ENCODE measurements at regions of chr4 and their contacts with region 1.

Region 1: DNA sequence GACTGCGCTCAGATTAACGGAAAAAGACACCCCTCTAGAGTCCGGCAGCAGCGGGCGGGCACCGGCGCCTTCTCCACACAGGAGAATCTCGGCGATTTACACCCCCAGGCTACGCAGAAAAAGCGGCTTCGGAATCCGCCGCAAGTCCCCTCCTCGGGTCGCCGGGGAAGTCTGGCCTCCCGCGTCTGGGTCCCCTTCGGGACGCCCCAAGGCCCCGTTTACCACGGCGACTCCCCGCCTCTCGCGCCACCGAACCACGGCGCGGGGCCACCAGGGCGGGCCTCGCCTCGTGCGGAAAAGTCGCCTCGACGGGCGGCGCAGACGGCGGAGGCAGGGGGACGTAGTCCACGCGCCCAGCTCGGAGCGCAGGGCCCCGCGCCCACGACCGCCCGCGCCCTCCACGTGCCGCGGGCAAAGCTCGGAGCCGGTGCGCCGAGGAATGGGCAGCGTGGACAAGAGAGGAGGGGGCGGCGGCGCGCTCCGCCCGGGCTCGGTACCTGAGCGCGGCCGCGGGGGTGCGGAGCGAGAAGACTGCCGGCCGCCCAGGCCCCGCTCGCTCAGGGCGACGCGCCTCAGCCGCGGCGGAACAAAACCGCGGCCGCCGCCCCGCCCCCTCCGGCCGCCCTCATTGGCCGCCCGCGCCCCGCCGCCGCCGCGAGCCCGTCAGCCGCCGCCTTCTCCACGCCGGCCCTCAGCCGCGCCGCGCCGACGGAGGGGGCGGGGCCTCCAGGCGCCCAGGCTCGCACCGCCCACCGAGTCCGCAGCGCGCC is at the start of gene FAM53A:
- DNase-seq: peak; percentile 94
- ATAC-seq: peak; percentile 94
- H3K4me3 ChIP-seq: peak within 1 kb of the TSS; percentile 45 to 78 (median 61)
- H3K4me3 Mint-ChIP-seq: peak within 1 kb of the TSS; percentile 94
- H3K27ac ChIP-seq: peak within 1 kb of the TSS in 1 of 2 donors; percentile 31
- H3K27ac Mint-ChIP-seq: peak within 1 kb of the TSS; percentile 86
- H3K4me1 ChIP-seq: peaks cover 10 to 16% of the 10 kb centered on the region in 2 donors
- H3K4me1 Mint-ChIP-seq: peaks cover 10% of the 10 kb centered on the region
- H3K27me3 ChIP-seq: no peaks in the 10 kb centered on the region
- H3K27me3 Mint-ChIP-seq: no peaks in the 10 kb centered on the region
- CTCF ChIP-seq: no peak
- total RNA-seq, gene FAM53A: 1.8 and 4.2 TPM in 2 replicates

Region 2: DNA sequence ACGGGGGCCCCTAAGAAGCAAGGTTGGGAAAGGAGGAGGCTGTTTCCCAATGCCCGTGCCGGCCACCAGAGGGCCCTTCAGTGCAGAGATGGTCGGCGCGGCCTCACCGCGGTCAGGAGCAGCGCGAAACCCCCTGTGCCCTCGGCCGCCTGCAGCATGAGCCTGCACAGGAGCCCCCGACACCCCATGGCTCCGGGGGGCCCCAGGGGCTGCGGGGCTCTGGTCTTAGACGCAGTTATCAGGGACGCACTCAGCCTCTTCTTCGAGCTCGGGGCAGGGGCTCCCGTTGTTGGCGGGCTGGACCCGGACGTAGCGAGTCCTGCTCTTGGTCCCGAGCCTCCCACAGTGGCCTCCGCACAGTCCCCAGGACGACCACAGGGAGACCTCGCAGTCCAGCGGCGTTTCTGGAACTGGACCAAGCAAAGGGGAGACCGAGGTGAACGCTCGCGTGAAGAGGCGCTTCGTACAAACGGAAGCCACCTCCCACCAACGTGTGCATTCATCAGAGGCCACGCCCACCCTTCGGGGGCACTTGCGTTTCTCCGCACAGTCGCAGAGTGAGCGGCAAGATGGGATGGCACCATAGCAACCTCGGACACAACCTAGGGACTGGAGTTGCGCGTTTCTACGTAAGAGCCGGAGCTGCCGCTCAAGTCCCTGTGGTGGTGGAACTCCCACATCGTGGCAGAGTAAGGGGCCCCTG is 516.5 kb before region 1 on chr4:
- CTCF ChIA-PET with region 1: no interaction called
- POLR2A ChIA-PET with region 1: no interaction called
- intact Hi-C with region 1: no loop called
- DNase-seq: peak; percentile 94
- ATAC-seq: peak; percentile 84
- H3K4me3 ChIP-seq: peak overlapping the region; percentile 67 to 97 (median 92)
- H3K4me3 Mint-ChIP-seq: peak overlapping the region; percentile 86
- H3K27ac ChIP-seq: peak overlapping the region; percentile 73 to 79
- H3K27ac Mint-ChIP-seq: peak overlapping the region; percentile 79
- H3K4me1 ChIP-seq: peaks cover 50 to 64% of the 10 kb centered on the region in 2 donors
- H3K4me1 Mint-ChIP-seq: peaks cover 54% of the 10 kb centered on the region
- H3K27me3 ChIP-seq: peaks cover 0 to 20% (median 9%) of the 10 kb centered on the region in 4 experiments
- H3K27me3 Mint-ChIP-seq: peaks cover 3% of the 10 kb centered on the region
- CTCF ChIP-seq: peak; percentile 96

Region 3: GRCh38 chr4:1317177-1318045 is 366.5 kb before region 1 on chr4:
- CTCF ChIA-PET with region 1: no interaction called
- POLR2A ChIA-PET with region 1: interaction called, 10 read pairs
- intact Hi-C with region 1: no loop called
- DNase-seq: no peak
- ATAC-seq: no peak
- H3K4me3 ChIP-seq: no peak overlapping the region
- H3K4me3 Mint-ChIP-seq: no peak overlapping the region
- H3K27ac ChIP-seq: no peak overlapping the region
- H3K27ac Mint-ChIP-seq: no peak overlapping the region
- H3K4me1 ChIP-seq: no peaks in the 10 kb centered on the region
- H3K4me1 Mint-ChIP-seq: no peaks in the 10 kb centered on the region
- H3K27me3 ChIP-seq: no peaks in the 10 kb centered on the region
- H3K27me3 Mint-ChIP-seq: no peaks in the 10 kb centered on the region
- CTCF ChIP-seq: no peak

Region 4: DNA sequence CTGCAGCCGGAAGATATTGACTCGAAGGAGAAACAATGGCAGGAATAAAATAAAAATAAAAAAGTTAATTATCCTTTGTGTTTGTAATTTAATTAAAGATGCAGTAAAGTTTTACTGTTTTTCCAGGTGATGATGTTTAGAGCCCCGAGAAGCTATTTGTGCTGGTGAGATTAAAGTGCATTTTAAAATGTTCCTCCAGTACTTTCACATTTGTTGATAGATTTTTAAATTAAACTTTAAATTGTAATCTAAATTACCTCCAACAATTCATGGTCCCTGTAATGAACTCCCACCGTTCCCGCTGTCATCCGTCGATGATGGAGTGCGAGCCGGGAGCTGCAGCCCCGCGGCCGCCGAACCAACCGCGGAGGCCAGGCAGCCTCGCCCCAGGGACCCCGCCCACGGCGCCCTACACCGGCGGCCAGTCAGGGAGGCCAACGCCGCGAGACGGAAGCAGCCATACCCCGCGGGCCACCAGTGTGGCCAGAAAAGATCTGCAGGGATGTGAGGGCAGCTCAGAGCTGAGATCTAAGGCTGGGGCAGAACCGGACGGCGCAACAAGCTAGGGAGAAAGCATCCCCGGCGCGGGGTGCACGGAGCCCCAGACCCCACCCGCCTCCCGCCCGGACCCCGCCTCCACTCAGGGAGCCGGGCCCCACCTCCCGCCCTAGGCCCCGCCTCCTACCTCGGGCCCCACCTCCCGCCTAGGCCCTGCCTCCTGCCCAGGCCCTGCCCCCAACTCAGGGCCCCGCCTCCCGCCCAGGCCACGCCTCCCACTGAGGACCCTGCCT is 103.8 kb before region 1 on chr4:
- CTCF ChIA-PET with region 1: no interaction called
- POLR2A ChIA-PET with region 1: no interaction called
- intact Hi-C with region 1: loop called (anchors 1 kb)
- DNase-seq: peak; percentile 95
- ATAC-seq: peak; percentile 79
- H3K4me3 ChIP-seq: peak overlapping the region; percentile 72 to 84 (median 76)
- H3K4me3 Mint-ChIP-seq: peak overlapping the region; percentile 85
- H3K27ac ChIP-seq: peak overlapping the region; percentile 46 to 71
- H3K27ac Mint-ChIP-seq: peak overlapping the region; percentile 83
- H3K4me1 ChIP-seq: peaks cover 0 to 4% of the 10 kb centered on the region in 2 donors
- H3K4me1 Mint-ChIP-seq: peaks cover 4% of the 10 kb centered on the region
- H3K27me3 ChIP-seq: no peaks in the 10 kb centered on the region
- H3K27me3 Mint-ChIP-seq: no peaks in the 10 kb centered on the region
- CTCF ChIP-seq: no peak

Region 5: GRCh38 chr4:1668488-1668840 is 15.5 kb before region 1 on chr4:
- CTCF ChIA-PET with region 1: no interaction called
- POLR2A ChIA-PET with region 1: no interaction called
- intact Hi-C with region 1: no loop called
- DNase-seq: no peak
- ATAC-seq: no peak
- H3K4me3 ChIP-seq: no peak overlapping the region
- H3K4me3 Mint-ChIP-seq: no peak overlapping the region
- H3K27ac ChIP-seq: no peak overlapping the region
- H3K27ac Mint-ChIP-seq: no peak overlapping the region
- H3K4me1 ChIP-seq: no peaks in the 10 kb centered on the region
- H3K4me1 Mint-ChIP-seq: no peaks in the 10 kb centered on the region
- H3K27me3 ChIP-seq: no peaks in the 10 kb centered on the region
- H3K27me3 Mint-ChIP-seq: no peaks in the 10 kb centered on the region
- CTCF ChIP-seq: no peak

Region 6: GRCh38 chr4:1712216-1713002 is 28.5 kb after region 1 on chr4 and contains the start of gene SLBP:
- CTCF ChIA-PET with region 1: interaction called, 503 read pairs
- POLR2A ChIA-PET with region 1: interaction called, 3 read pairs
- intact Hi-C with region 1: loop called (anchors 1 kb)
- DNase-seq: peak; percentile 99
- ATAC-seq: peak; percentile 86
- H3K4me3 ChIP-seq: peak within 1 kb of the TSS; percentile 78 to 100 (median 96)
- H3K4me3 Mint-ChIP-seq: peak within 1 kb of the TSS; percentile 91
- H3K27ac ChIP-seq: peak within 1 kb of the TSS; percentile 83 to 99
- H3K27ac Mint-ChIP-seq: peak within 1 kb of the TSS; percentile 98
- H3K4me1 ChIP-seq: peaks cover 52 to 60% of the 10 kb centered on the region in 2 donors
- H3K4me1 Mint-ChIP-seq: peaks cover 66% of the 10 kb centered on the region
- H3K27me3 ChIP-seq: no peaks in the 10 kb centered on the region
- H3K27me3 Mint-ChIP-seq: no peaks in the 10 kb centered on the region
- CTCF ChIP-seq: no peak
- total RNA-seq, gene SLBP: 31.8 and 33.9 TPM in 2 replicates

Region 7: DNA sequence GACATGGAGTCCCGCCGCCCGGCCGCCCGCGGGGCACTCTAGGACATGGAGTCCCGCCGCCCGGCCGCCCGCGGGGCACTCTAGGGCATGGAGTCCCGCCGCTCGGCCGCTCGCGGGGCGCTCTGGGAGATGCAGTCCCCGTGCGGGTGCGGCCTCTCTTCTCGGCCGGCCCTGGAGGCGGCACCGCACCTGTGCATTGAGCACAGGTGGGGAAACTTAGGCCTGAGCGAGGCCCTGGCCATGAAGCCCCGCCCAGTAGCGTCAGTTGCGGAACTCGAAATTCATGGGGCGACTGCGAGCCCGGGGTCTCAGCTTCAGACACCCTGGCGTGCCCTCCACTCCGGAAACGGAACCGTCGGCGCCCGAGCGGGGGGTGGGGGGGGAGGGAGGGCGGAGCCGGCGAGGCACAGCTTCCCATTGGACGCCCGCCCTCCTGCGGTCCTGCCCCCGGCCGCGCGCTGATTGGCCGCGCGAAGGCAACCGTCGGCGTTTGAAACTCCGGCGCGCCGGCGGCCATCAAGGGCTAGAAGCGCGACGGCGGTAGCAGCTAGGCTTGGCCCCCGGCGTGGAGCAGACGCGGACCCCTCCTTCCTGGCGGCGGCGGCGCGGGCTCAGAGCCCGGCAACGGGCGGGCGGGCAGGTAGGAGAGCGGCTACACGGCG is 37.2 kb after region 1 on chr4 and contains the starts of genes TACC3 and TMEM129:
- CTCF ChIA-PET with region 1: interaction called, 503 read pairs
- POLR2A ChIA-PET with region 1: interaction called, 4 read pairs
- intact Hi-C with region 1: loop called (anchors 1 kb)
- DNase-seq: peak; percentile 98
- ATAC-seq: peak; percentile 81
- H3K4me3 ChIP-seq: peak within 1 kb of the TSS; percentile 41 to 69 (median 60)
- H3K4me3 Mint-ChIP-seq: peak within 1 kb of the TSS; percentile 93
- H3K27ac ChIP-seq: peak within 1 kb of the TSS; percentile 89 to 96
- H3K27ac Mint-ChIP-seq: peak within 1 kb of the TSS; percentile 98
- H3K4me1 ChIP-seq: peaks cover 59 to 84% of the 10 kb centered on the region in 2 donors
- H3K4me1 Mint-ChIP-seq: peaks cover 65% of the 10 kb centered on the region
- H3K27me3 ChIP-seq: no peaks in the 10 kb centered on the region
- H3K27me3 Mint-ChIP-seq: no peaks in the 10 kb centered on the region
- CTCF ChIP-seq: no peak
- total RNA-seq, gene TACC3: 47.9 and 54.5 TPM in 2 replicates
- total RNA-seq, gene TMEM129: 41.0 and 41.9 TPM in 2 replicates

Region 8: GRCh38 chr4:1792832-1793495 is 109.0 kb after region 1 on chr4 and contains the start of gene FGFR3:
- CTCF ChIA-PET with region 1: no interaction called
- POLR2A ChIA-PET with region 1: no interaction called
- intact Hi-C with region 1: loop called (anchors 5 kb)
- DNase-seq: peak; percentile 67
- ATAC-seq: peak; percentile 83
- H3K4me3 ChIP-seq: peak within 1 kb of the TSS in 4 of 5 experiments; percentile 11 to 48 (median 41)
- H3K4me3 Mint-ChIP-seq: peak within 1 kb of the TSS; percentile 66
- H3K27ac ChIP-seq: no peak within 1 kb of the TSS
- H3K27ac Mint-ChIP-seq: no peak within 1 kb of the TSS
- H3K4me1 ChIP-seq: peaks cover 20 to 27% of the 10 kb centered on the region in 2 donors
- H3K4me1 Mint-ChIP-seq: peaks cover 3% of the 10 kb centered on the region
- H3K27me3 ChIP-seq: peaks cover 0 to 42% (median 28%) of the 10 kb centered on the region in 4 experiments
- H3K27me3 Mint-ChIP-seq: peaks cover 10% of the 10 kb centered on the region
- CTCF ChIP-seq: no peak
- total RNA-seq, gene FGFR3: not detected in 2 replicates

Region 9: DNA sequence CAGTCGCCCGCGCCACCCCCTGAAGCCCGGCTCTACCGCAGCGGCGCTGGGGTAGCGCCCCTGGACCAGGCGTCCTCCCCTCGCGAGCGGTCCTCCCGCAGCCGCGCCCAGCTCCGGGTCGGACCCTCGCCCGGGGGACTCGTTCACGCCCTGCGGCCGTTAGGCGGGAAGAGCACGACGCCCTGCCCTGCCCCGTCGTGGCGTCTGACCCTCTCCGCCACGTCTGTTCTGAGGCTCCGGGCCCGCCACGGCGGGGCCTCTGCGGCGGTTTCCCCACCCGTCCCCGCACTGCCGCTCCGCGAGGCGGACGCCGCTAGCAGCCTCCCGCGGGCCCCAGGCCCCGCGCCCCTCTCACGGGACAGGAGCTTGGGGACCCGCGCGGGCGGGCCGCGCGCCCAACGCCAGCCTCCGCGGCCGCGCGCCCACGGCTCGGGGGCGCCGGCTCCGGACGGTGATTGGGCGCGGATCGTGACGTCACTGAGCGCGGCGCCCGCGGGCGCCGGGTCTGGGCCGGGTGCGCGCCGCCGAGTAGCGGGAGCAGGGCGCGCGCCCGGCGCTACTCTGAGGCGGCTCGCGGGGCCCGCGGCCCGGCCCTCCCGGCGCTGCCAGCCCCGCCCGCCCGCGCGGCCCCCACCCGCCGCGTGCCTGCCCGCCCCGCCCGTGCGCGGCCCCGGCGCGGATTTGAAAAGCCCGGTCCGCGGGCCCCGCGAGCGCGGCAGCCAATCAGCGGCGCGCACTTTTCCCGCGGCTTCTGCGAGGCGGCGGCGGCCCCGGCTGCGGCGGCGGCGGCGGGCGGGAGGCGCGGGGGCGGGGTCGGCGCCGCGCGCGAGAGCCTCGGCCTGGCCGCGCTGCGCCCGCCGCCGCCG is 186.9 kb after region 1 on chr4 and contains the start of gene NSD2:
- CTCF ChIA-PET with region 1: no interaction called
- POLR2A ChIA-PET with region 1: interaction called, 5 read pairs
- intact Hi-C with region 1: loop called (anchors 1 kb)
- DNase-seq: peak; percentile 95
- ATAC-seq: peak; percentile 66
- H3K4me3 ChIP-seq: peak within 1 kb of the TSS; percentile 13 to 89 (median 79)
- H3K4me3 Mint-ChIP-seq: peak within 1 kb of the TSS; percentile 87
- H3K27ac ChIP-seq: peak within 1 kb of the TSS; percentile 87 to 95
- H3K27ac Mint-ChIP-seq: peak within 1 kb of the TSS; percentile 93
- H3K4me1 ChIP-seq: peaks cover 12 to 26% of the 10 kb centered on the region in 2 donors
- H3K4me1 Mint-ChIP-seq: peaks cover 26% of the 10 kb centered on the region
- H3K27me3 ChIP-seq: peaks cover 0 to 4% (median 2%) of the 10 kb centered on the region in 4 experiments
- H3K27me3 Mint-ChIP-seq: no peaks in the 10 kb centered on the region
- CTCF ChIP-seq: no peak
- total RNA-seq, gene NSD2: 64.8 and 71.9 TPM in 2 replicates